Posterior vena cava (tissue), 2 donors: ENCODE measurements at regions of chr5 and their contacts with region 1.

Region 1: GRCh38 chr5:159100025-159100781 is 487 bp upstream of the EBF1 start:
- DNase-seq: peak; percentile 98

Region 2: DNA sequence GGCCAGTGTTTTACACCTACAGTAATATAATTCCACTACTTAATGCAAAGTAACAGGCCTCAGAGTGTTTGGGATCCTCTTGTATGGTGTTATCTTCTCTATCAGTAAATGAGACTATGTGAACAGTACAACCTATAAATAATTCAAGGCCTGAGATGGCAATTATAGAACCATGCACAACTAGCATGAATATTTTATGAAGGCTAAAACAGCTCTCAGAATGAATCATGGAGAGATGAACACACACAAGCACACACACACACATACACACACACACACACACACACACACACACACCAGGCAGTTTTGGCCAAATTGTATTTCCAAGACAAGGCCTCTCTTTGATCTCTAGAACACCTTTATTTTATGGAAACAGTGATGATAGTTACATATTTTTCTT is 225.4 kb before region 1 on chr5:
- intact Hi-C with region 1: loop called in 1 of 2 experiments (anchors 5 kb)
- DNase-seq: no peak

Region 3: GRCh38 chr5:158979749-158980521 is 120.3 kb before region 1 on chr5:
- intact Hi-C with region 1: loop called in 1 of 2 experiments (anchors 10 kb)
- DNase-seq: peak; percentile 89

Region 4: DNA sequence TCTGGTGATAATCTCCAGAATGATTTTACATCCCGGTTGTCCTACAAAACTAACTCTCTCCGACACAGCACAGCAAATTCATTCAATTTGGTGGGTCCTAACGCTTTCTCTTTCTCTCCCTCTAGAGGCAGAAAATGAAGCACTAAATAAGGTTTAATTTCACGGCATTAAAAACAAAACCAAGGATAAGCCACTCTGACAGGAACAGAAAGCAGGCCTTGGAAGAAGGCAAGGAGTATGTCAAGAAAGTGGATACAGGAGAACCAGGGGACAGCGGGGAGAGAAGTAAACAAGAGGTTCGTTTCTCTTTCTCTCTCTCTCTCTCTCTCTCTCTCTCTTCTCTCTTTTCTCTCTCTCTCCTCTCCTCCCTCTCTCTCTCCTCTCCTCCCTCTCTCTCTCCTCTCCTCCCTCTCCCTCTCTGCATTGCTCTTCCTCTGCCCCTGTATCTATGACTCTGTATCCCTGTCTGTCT is 50.3 kb before region 1 on chr5:
- intact Hi-C with region 1: loop called (anchors 5 kb)
- DNase-seq: no peak

Region 5: GRCh38 chr5:160082614-160083500 is 982.7 kb after region 1 on chr5:
- intact Hi-C with region 1: no loop called
- DNase-seq: no peak